Activated CD4-positive, alpha-beta memory T cell treated with anti-CD3 and anti-CD28 coated beads, Interleukin-2, amount 10 ng/mL, durations not matched to agents 7 days and 5 days (primary cell): ENCODE measurements at regions of chr5 and their contacts with region 1.

Region 1: DNA sequence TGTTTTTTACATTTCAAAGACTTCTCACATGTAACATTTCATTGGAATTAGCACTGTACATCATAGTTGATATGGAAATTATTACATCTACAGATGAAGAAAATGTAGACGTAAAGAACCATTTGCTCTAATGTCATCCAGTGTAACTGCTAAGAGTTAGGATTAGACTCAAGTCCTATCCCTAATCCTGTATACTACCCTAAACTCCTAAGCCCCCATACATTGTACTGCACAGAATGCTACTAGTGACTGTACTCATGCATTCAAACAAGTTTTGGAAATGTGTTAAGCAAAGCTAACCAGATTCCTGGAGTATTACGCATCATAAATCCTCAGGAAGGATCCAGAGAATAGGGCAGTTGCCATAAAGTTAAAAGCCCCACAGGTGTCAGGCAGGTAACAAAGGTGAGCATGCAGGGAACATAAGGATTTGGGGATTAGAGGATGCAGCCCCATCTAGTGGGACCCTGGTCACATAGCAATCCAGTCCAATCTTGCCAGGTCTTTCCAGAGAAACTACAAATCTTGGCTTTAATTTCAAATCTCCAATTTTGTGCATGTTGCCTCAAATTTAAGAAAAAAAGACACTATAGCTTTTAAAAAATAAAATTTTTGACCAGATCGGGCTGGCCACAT is 32.0 kb downstream of the HAVCR1 start:
- DNase-seq: no peak
- H3K4me3 Mint-ChIP-seq: no peak overlapping the region
- H3K27ac Mint-ChIP-seq: peak overlapping the region; percentile 75
- H3K4me1 Mint-ChIP-seq: peaks cover 87% of the 10 kb centered on the region
- H3K27me3 Mint-ChIP-seq: no peaks in the 10 kb centered on the region

Region 2: DNA sequence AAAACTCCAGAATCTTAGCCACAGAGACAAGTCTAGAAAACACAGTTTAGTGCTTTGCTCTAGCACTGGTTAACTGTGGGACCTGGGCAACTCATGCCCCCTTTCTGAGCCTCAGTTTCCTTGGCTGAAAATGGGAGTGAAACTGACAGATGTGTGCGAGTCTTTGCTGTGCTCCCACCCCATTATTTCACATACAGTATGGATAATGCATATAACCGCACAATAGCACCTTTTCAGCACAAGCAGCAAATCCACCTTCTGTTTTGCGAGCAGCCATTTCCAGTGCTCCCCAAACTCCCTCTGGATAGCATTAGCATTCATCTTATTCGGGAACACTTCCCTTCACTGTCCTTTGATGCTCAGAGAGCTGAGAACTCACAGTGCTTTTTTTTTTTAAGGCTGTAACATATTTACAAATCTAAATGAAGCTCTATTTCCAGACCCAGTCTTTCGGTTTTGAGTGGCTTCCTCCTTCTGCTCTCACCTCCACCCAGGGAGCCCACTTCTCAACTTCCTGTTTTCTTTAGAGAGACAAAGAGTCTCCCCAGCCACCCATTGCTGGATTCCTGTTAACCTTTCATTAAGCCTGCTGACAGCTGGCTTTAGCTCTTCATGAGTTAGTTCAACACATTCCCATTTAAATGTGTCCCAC is 113.1 kb before region 1 on chr5:
- CTCF ChIA-PET with region 1: interaction called, 5 read pairs
- POLR2A ChIA-PET with region 1: interaction called, 11 read pairs
- DNase-seq: peak; percentile 41
- H3K4me3 Mint-ChIP-seq: peak overlapping the region; percentile 58
- H3K27ac Mint-ChIP-seq: peak overlapping the region; percentile 97
- H3K4me1 Mint-ChIP-seq: peaks cover 41% of the 10 kb centered on the region
- H3K27me3 Mint-ChIP-seq: no peaks in the 10 kb centered on the region

Region 3: GRCh38 chr5:156934450-156935211 is 92.3 kb before region 1 on chr5:
- CTCF ChIA-PET with region 1: interaction called, 17 read pairs
- POLR2A ChIA-PET with region 1: interaction called, 7 read pairs
- DNase-seq: peak; percentile 73
- H3K4me3 Mint-ChIP-seq: peak overlapping the region; percentile 19
- H3K27ac Mint-ChIP-seq: peak overlapping the region; percentile 60
- H3K4me1 Mint-ChIP-seq: peaks cover 37% of the 10 kb centered on the region
- H3K27me3 Mint-ChIP-seq: peaks cover 7% of the 10 kb centered on the region

Region 4: GRCh38 chr5:156963125-156963524 is 63.8 kb before region 1 on chr5 and contains the start of gene TIMD4:
- CTCF ChIA-PET with region 1: no interaction called
- POLR2A ChIA-PET with region 1: no interaction called
- DNase-seq: no peak
- H3K4me3 Mint-ChIP-seq: no peak within 1 kb of the TSS
- H3K27ac Mint-ChIP-seq: no peak within 1 kb of the TSS
- H3K4me1 Mint-ChIP-seq: no peaks in the 10 kb centered on the region
- H3K27me3 Mint-ChIP-seq: no peaks in the 10 kb centered on the region
- total RNA-seq, gene TIMD4: 2.4 TPM

Region 5: GRCh38 chr5:157038568-157039187 is 11.8 kb after region 1 on chr5:
- CTCF ChIA-PET with region 1: interaction called, 18 read pairs
- POLR2A ChIA-PET with region 1: interaction called, 13 read pairs
- DNase-seq: no peak
- H3K4me3 Mint-ChIP-seq: peak overlapping the region; percentile 23
- H3K27ac Mint-ChIP-seq: peak overlapping the region; percentile 81
- H3K4me1 Mint-ChIP-seq: peaks cover 21% of the 10 kb centered on the region
- H3K27me3 Mint-ChIP-seq: no peaks in the 10 kb centered on the region

Region 6: DNA sequence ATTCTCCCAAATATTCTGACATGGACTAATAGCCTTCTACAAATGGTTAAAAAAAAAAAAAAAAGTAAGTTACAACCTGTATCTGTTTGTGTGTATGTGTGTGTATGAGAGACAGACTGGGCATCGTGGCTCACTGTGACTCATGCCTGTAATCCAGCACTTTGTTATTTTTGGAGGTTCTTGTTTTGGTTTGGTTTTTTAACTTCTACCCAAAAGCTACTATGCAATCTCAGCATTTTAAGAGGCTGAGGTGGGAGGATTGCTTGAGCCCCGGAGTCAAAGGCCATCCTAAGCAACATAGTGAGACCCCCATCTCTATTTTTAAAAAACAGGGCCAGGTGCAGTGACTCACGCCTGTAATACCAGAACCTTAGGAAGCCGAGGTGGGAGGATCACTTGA is 49.7 kb after region 1 on chr5:
- CTCF ChIA-PET with region 1: interaction called, 3 read pairs
- POLR2A ChIA-PET with region 1: interaction called, 20 read pairs
- DNase-seq: peak; percentile 38
- H3K4me3 Mint-ChIP-seq: no peak overlapping the region
- H3K27ac Mint-ChIP-seq: peak overlapping the region; percentile 50
- H3K4me1 Mint-ChIP-seq: peaks cover 52% of the 10 kb centered on the region
- H3K27me3 Mint-ChIP-seq: no peaks in the 10 kb centered on the region

Region 7: GRCh38 chr5:157108976-157109375 is 82.1 kb after region 1 on chr5 and contains the start of gene HAVCR2:
- CTCF ChIA-PET with region 1: interaction called, 17 read pairs
- POLR2A ChIA-PET with region 1: interaction called, 50 read pairs
- DNase-seq: peak; percentile 82
- H3K4me3 Mint-ChIP-seq: peak within 1 kb of the TSS; percentile 88
- H3K27ac Mint-ChIP-seq: peak within 1 kb of the TSS; percentile 96
- H3K4me1 Mint-ChIP-seq: peaks cover 70% of the 10 kb centered on the region
- H3K27me3 Mint-ChIP-seq: no peaks in the 10 kb centered on the region
- total RNA-seq, gene HAVCR2: 62.4 to 66.9 TPM

Region 8: GRCh38 chr5:157130925-157131324 is 104.0 kb after region 1 on chr5:
- CTCF ChIA-PET with region 1: interaction called, 23 read pairs
- POLR2A ChIA-PET with region 1: interaction called, 5 read pairs
- DNase-seq: no peak
- H3K4me3 Mint-ChIP-seq: no peak overlapping the region
- H3K27ac Mint-ChIP-seq: no peak overlapping the region
- H3K4me1 Mint-ChIP-seq: peaks cover 26% of the 10 kb centered on the region
- H3K27me3 Mint-ChIP-seq: peaks cover 2% of the 10 kb centered on the region